Ascending aorta (tissue), 2 donors: ENCODE measurements at regions of chr10 and their contacts with region 1.

Region 1: GRCh38 chr10:103888113-103888841 is 29.7 kb downstream of the STN1 start:
- DNase-seq: peak; percentile 69 to 95
- H3K4me3 ChIP-seq: no peak overlapping the region
- H3K27ac ChIP-seq: peak overlapping the region; percentile 68 to 92
- H3K4me1 ChIP-seq: peaks cover 12 to 20% of the 10 kb centered on the region in 2 donors
- H3K27me3 ChIP-seq: no peaks in the 10 kb centered on the region
- CTCF ChIP-seq: peak; percentile 82 to 89 (median 88)

Region 2: GRCh38 chr10:103911021-103911459 is 22.8 kb after region 1 on chr10:
- intact Hi-C with region 1: loop called (anchors 2 kb)
- DNase-seq: no peak
- H3K4me3 ChIP-seq: no peak overlapping the region
- H3K27ac ChIP-seq: peak overlapping the region; percentile 72 to 81
- H3K4me1 ChIP-seq: peaks cover 6 to 43% of the 10 kb centered on the region in 2 donors
- H3K27me3 ChIP-seq: no peaks in the 10 kb centered on the region
- CTCF ChIP-seq: no peak

Region 3: GRCh38 chr10:103918053-103918846 is 30.0 kb after region 1 on chr10 and contains the start of gene STN1:
- intact Hi-C with region 1: loop called (anchors 2 kb)
- DNase-seq: peak; percentile 87 to 98
- H3K4me3 ChIP-seq: peak within 1 kb of the TSS; percentile 76 to 91
- H3K27ac ChIP-seq: peak within 1 kb of the TSS; percentile 96 to 97
- H3K4me1 ChIP-seq: peaks cover 6 to 16% of the 10 kb centered on the region in 2 donors
- H3K27me3 ChIP-seq: no peaks in the 10 kb centered on the region
- CTCF ChIP-seq: no peak
- total RNA-seq, gene STN1: 24.5 TPM

Region 4: GRCh38 chr10:103966671-103967447 is 78.6 kb after region 1 on chr10 and contains the start of gene SLK:
- intact Hi-C with region 1: loop called (anchors 1 kb)
- DNase-seq: peak; percentile 16 to 86
- H3K4me3 ChIP-seq: peak within 1 kb of the TSS; percentile 87 to 100
- H3K27ac ChIP-seq: peak within 1 kb of the TSS; percentile 91 to 99
- H3K4me1 ChIP-seq: peaks cover 0 to 13% of the 10 kb centered on the region in 2 donors
- H3K27me3 ChIP-seq: no peaks in the 10 kb centered on the region
- CTCF ChIP-seq: peak in 1 of 3 experiments; percentile 10
- total RNA-seq, gene SLK: 26.1 TPM

Region 5: GRCh38 chr10:104209575-104210198 is 321.4 kb after region 1 on chr10:
- intact Hi-C with region 1: loop called (anchors 5 kb)
- DNase-seq: no peak
- H3K4me3 ChIP-seq: no peak overlapping the region
- H3K27ac ChIP-seq: no peak overlapping the region
- H3K4me1 ChIP-seq: no peaks in the 10 kb centered on the region
- H3K27me3 ChIP-seq: no peaks in the 10 kb centered on the region
- CTCF ChIP-seq: peak; percentile 16 to 61 (median 29)